HCT116 (cell line): ENCODE measurements at regions of chr19 and their contacts with region 1.

Region 1: GRCh38 chr19:55301459-55302317 is 17.9 kb downstream of the BRSK1 start:
- DNase-seq: peak; percentile 54
- ATAC-seq: peak; percentile 83
- H3K4me3 ChIP-seq: no peak overlapping the region
- H3K27ac ChIP-seq: no peak overlapping the region
- H3K4me1 ChIP-seq: peaks cover 0 to 7% of the 10 kb centered on the region in 2 experiments; a peak in 1 of 4 replicates
- H3K27me3 ChIP-seq: no peaks in the 10 kb centered on the region
- CTCF ChIP-seq: peak; percentile 54 to 92 (median 83); a peak in 5 of 6 replicates
- POLR2A ChIP-seq: no peak
- RAD21 ChIP-seq: peak; percentile 75

Region 2: DNA sequence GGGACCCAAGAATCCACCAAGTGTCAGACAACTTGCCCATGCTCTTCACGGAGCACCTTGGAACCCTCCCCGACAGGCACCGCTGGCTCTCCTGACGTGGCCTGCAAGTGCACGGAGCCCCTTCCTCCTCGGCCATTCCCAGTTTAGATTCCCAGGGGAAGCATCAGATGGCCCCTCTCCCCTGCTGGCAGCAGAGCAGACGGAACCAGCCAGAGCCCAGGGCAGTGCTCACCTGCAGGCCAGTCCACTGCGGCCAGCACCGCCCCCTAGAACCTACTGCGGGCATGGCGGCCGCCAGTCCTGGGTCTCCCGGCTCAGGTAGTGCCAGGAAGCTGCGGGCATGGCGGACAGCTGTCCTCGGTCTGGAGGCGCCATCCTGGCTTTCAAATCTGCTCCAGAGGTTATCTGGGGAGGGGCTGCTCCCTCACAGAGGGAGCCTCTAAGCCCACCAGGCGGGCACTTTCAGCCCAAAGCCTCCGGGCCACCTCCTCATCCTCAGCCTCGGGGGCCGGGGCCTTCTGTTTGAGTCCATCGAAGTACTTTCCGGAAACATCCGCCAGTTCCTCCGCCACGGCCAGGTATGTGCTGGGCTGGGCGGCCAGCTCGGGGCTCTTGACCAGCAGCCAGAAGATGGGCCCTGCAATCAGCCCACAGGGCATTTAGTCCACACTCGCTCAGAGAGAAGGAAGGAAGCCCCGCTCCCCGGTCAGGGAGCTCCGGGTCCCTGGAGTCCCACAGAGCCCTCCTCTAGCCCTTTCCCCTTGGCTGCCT is 256.8 kb before region 1 on chr19:
- CTCF ChIA-PET with region 1: no interaction called
- POLR2A ChIA-PET with region 1: no interaction called
- RAD21 ChIA-PET with region 1: no interaction called
- intact Hi-C with region 1: no loop called
- DNase-seq: no peak
- ATAC-seq: peak; percentile 23; the same call in 1 of the 2 replicates
- H3K4me3 ChIP-seq: no peak overlapping the region
- H3K27ac ChIP-seq: peak overlapping the region; percentile 24; the same call in 1 of the 2 replicates
- H3K4me1 ChIP-seq: no peaks in the 10 kb centered on the region
- H3K27me3 ChIP-seq: no peaks in the 10 kb centered on the region
- CTCF ChIP-seq: no peak; a peak in 1 of 6 replicates
- POLR2A ChIP-seq: no peak
- RAD21 ChIP-seq: no peak

Region 3: GRCh38 chr19:55289117-55289796 is 12.4 kb before region 1 on chr19:
- CTCF ChIA-PET with region 1: interaction called, 15 read pairs
- POLR2A ChIA-PET with region 1: no interaction called
- RAD21 ChIA-PET with region 1: no interaction called
- intact Hi-C with region 1: no loop called
- DNase-seq: no peak
- ATAC-seq: 0 out of 2 replicates have a peak, but pooled peaks have one; percentile 21
- H3K4me3 ChIP-seq: no peak overlapping the region
- H3K27ac ChIP-seq: no peak overlapping the region
- H3K4me1 ChIP-seq: peaks cover 0 to 19% of the 10 kb centered on the region in 2 experiments; a peak in 3 of 4 replicates
- H3K27me3 ChIP-seq: no peaks in the 10 kb centered on the region
- CTCF ChIP-seq: no peak
- POLR2A ChIP-seq: no peak
- RAD21 ChIP-seq: no peak

Region 4: GRCh38 chr19:55312621-55313512 is 11.2 kb after region 1 on chr19:
- CTCF ChIA-PET with region 1: interaction called, 11 read pairs
- POLR2A ChIA-PET with region 1: no interaction called
- RAD21 ChIA-PET with region 1: no interaction called
- intact Hi-C with region 1: no loop called
- DNase-seq: no peak
- ATAC-seq: peak; percentile 29; the same call in 1 of the 2 replicates
- H3K4me3 ChIP-seq: no peak overlapping the region
- H3K27ac ChIP-seq: no peak overlapping the region
- H3K4me1 ChIP-seq: no peaks in the 10 kb centered on the region
- H3K27me3 ChIP-seq: no peaks in the 10 kb centered on the region
- CTCF ChIP-seq: no peak
- POLR2A ChIP-seq: no peak
- RAD21 ChIP-seq: no peak

Region 5: DNA sequence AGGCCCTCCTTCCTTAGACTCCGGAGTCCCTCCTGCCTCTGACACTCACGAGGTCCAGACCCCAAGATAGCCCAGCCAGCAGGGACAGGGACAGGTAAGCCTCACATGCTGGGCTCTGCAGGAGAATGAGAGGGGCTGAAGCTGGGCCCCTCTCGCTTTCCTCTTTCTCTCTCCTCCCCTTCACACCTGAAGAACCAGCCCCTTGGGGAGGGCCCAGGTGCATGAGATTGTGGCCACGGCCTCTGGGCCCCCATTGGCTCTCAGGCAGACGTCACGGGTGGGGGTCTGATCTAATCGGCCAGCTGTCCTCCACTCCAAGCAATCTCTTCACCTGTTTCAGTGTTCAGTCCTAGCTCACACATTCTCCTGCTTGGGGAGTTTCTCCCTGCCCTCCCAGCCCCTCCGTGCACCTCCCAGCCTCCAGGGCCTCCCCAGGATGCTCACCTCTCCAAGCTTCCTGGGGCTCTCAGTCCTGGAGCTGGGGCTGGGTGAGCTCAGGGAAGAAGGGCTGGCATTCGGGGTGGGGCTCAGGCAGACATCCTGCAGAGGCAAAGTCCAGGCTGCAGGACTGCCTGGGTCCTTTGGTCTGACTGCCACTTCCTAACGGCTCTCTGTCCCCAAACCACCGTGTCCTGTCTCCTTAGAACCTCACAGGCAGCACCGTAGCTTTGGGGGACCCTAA is 20.7 kb after region 1 on chr19:
- CTCF ChIA-PET with region 1: interaction called, 12 read pairs
- POLR2A ChIA-PET with region 1: no interaction called
- RAD21 ChIA-PET with region 1: no interaction called
- intact Hi-C with region 1: no loop called
- DNase-seq: no peak
- ATAC-seq: no peak
- H3K4me3 ChIP-seq: no peak overlapping the region
- H3K27ac ChIP-seq: no peak overlapping the region
- H3K4me1 ChIP-seq: peaks cover 1 to 2% of the 10 kb centered on the region in 2 experiments; a peak in 3 of 4 replicates
- H3K27me3 ChIP-seq: no peaks in the 10 kb centered on the region
- CTCF ChIP-seq: no peak
- POLR2A ChIP-seq: no peak
- RAD21 ChIP-seq: no peak

Region 6: GRCh38 chr19:55339048-55339888 is 37.6 kb after region 1 on chr19 and contains the start of gene KMT5C:
- CTCF ChIA-PET with region 1: interaction called, 15 read pairs
- POLR2A ChIA-PET with region 1: no interaction called
- RAD21 ChIA-PET with region 1: no interaction called
- intact Hi-C with region 1: no loop called
- DNase-seq: peak; percentile 100
- ATAC-seq: peak; percentile 85
- H3K4me3 ChIP-seq: peak within 1 kb of the TSS; percentile 74 to 83
- H3K27ac ChIP-seq: peak within 1 kb of the TSS; percentile 92
- H3K4me1 ChIP-seq: peaks cover 9 to 33% of the 10 kb centered on the region in 2 experiments
- H3K27me3 ChIP-seq: no peaks in the 10 kb centered on the region
- CTCF ChIP-seq: 0 out of 6 replicates have a peak, but pooled peaks of 1 of the 3 experiments have one; percentile 17
- POLR2A ChIP-seq: peak; percentile 31
- RAD21 ChIP-seq: no peak
- total RNA-seq, gene KMT5C: 27.5 TPM

Region 7: GRCh38 chr19:55353803-55354697 is 52.4 kb after region 1 on chr19:
- CTCF ChIA-PET with region 1: no interaction called
- POLR2A ChIA-PET with region 1: no interaction called
- RAD21 ChIA-PET with region 1: no interaction called
- intact Hi-C with region 1: no loop called
- DNase-seq: peak; percentile 23
- ATAC-seq: peak; percentile 91
- H3K4me3 ChIP-seq: peak overlapping the region; percentile 46 to 61
- H3K27ac ChIP-seq: peak overlapping the region; percentile 36; the same call in 1 of the 2 replicates
- H3K4me1 ChIP-seq: peaks cover 2 to 42% of the 10 kb centered on the region in 2 experiments; a peak in 3 of 4 replicates
- H3K27me3 ChIP-seq: no peaks in the 10 kb centered on the region
- CTCF ChIP-seq: no peak
- POLR2A ChIP-seq: no peak
- RAD21 ChIP-seq: no peak

Region 8: GRCh38 chr19:55385740-55386529 is 84.2 kb after region 1 on chr19 and contains the start of gene RPL28:
- CTCF ChIA-PET with region 1: interaction called, 12 read pairs
- POLR2A ChIA-PET with region 1: interaction called, 8 read pairs
- RAD21 ChIA-PET with region 1: no interaction called
- intact Hi-C with region 1: loop called (anchors 5 kb)
- DNase-seq: peak; percentile 97
- ATAC-seq: peak; percentile 77
- H3K4me3 ChIP-seq: peak within 1 kb of the TSS; percentile 99 to 100
- H3K27ac ChIP-seq: peak within 1 kb of the TSS; percentile 99
- H3K4me1 ChIP-seq: peaks cover 6 to 66% of the 10 kb centered on the region in 2 experiments; a peak in 3 of 4 replicates
- H3K27me3 ChIP-seq: no peaks in the 10 kb centered on the region
- CTCF ChIP-seq: no peak
- POLR2A ChIP-seq: peak; percentile 99
- RAD21 ChIP-seq: no peak
- total RNA-seq, gene RPL28: 3,050 TPM

Region 9: GRCh38 chr19:55579766-55580621 is 278.3 kb after region 1 on chr19:
- CTCF ChIA-PET with region 1: no interaction called
- POLR2A ChIA-PET with region 1: no interaction called
- RAD21 ChIA-PET with region 1: no interaction called
- intact Hi-C with region 1: no loop called
- DNase-seq: no peak
- ATAC-seq: peak; percentile 52
- H3K4me3 ChIP-seq: peak overlapping the region; percentile 92 to 94
- H3K27ac ChIP-seq: peak overlapping the region; percentile 78
- H3K4me1 ChIP-seq: peaks cover 7 to 14% of the 10 kb centered on the region in 2 experiments; a peak in 3 of 4 replicates
- H3K27me3 ChIP-seq: no peaks in the 10 kb centered on the region
- CTCF ChIP-seq: no peak
- POLR2A ChIP-seq: no peak
- RAD21 ChIP-seq: no peak